IMR-90 (cell line): ENCODE measurements at regions of chr5 and their contacts with region 1.

Region 1: GRCh38 chr5:173755319-173755718 is 132.8 kb upstream of the CPEB4 start:
- DNase-seq: no peak
- ATAC-seq: no peak
- H3K4me3 ChIP-seq: no peak overlapping the region
- H3K27ac ChIP-seq: no peak overlapping the region
- H3K4me1 ChIP-seq: peaks cover 3% of the 10 kb centered on the region; the same call in 1 of the 2 replicates
- H3K27me3 ChIP-seq: peaks cover 2% of the 10 kb centered on the region
- CTCF ChIP-seq: no peak
- POLR2A ChIP-seq: no peak
- RAD21 ChIP-seq: no peak

Region 2: GRCh38 chr5:173396311-173396993 is 358.9 kb before region 1 on chr5:
- CTCF ChIA-PET with region 1: no interaction called
- POLR2A ChIA-PET with region 1: no interaction called
- dilution Hi-C with region 1: no loop called
- in situ Hi-C with region 1: no loop called
- intact Hi-C with region 1: no loop called
- DNase-seq: no peak
- ATAC-seq: no peak
- H3K4me3 ChIP-seq: no peak overlapping the region
- H3K27ac ChIP-seq: 0 out of 2 replicates have a peak overlapping the region, but pooled peaks have one; percentile 7
- H3K4me1 ChIP-seq: peaks cover 13% of the 10 kb centered on the region
- H3K27me3 ChIP-seq: no peaks in the 10 kb centered on the region
- CTCF ChIP-seq: no peak
- POLR2A ChIP-seq: no peak
- RAD21 ChIP-seq: no peak

Region 3: DNA sequence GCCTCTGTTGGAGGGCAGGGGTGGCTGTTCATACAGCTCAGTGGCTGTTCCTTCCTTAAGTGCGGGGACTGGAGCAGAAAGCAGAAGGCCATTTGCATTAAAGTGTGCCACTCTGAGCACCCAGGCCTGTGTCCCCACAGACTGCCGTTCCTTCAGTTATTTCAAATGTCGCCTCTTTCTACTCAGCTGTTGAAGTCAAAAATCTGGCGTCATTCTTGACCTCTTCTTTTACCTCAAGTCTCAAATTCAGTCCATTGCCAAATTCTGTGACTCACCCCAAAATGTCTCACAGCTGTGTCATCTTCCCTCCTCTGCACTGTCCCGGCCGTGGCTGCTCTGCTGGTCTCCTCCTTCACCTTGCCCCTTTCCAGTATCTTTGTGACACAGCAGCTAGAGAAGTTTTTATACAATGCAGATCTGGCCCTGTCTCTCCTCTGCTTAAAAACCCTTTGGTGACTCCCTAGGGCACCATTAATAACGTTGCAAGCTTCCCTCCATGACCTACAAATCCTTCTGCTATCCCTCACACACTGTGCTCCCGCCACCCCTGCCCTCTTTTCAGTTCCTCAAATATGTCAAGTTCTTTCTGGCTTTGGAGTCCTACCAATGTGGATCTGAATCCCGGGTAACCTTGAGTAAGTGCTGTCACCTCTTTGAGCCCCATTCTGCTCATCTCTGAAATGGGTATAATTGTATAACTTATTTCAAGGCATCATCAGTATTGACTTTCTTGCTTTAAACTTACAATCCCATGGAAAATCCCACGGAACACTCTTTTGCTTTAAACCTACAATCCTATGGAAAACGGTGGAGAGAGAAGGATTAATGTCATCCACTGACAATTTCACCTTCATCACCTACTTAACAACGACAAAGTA is 40.5 kb before region 1 on chr5:
- CTCF ChIA-PET with region 1: no interaction called
- POLR2A ChIA-PET with region 1: no interaction called
- dilution Hi-C with region 1: no loop called
- in situ Hi-C with region 1: no loop called
- intact Hi-C with region 1: loop called (anchors 1 kb)
- DNase-seq: peak; percentile 93
- ATAC-seq: peak; percentile 91
- H3K4me3 ChIP-seq: no peak overlapping the region
- H3K27ac ChIP-seq: peak overlapping the region; percentile 31; the same call in 1 of the 2 replicates
- H3K4me1 ChIP-seq: peaks cover 11% of the 10 kb centered on the region
- H3K27me3 ChIP-seq: no peaks in the 10 kb centered on the region
- CTCF ChIP-seq: no peak
- POLR2A ChIP-seq: no peak
- RAD21 ChIP-seq: no peak